ENCODE measurements at regions of chr16 and their contacts with region 1.

Region 1: DNA sequence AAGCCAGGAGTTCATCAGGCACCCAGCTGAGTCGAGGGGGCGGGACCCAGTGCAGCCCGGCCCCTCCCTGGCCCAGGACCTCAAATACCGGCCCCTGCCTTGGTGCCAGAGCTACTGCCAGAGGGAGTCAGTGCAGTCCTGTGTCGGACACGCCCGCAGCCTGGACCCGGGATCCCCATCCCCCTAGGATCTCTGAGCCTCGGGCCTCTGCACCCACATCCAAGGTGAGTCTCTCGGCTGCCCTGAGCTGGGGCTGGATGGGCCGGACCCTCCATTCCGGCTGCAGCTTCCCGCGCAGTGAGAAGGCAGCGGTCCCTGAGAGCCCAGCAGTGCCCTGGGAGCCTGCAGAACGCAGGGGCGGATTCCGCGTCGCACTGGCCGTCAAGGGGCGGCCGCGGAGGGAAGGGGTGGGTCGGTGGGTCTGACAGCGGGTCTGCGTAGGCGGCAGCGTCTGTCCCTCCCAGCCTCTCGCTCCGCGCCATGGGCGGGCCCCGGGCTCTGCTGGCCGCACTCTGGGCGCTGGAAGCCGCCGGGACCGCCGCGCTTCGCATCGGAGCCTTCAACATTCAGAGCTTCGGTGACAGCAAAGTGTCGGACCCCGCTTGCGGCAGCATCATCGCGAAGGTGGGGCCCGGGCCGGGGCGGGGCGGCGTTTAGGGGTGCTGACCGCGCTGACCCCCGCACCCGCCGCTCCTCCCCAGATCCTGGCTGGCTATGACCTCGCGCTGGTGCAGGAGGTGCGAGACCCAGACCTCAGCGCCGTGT is at the start of gene DNASE1L2:
- H3K4me3 ChIP-seq: peak within 1 kb of the TSS; percentile 31
- H3K27ac ChIP-seq: peak within 1 kb of the TSS; percentile 48; the same call in 1 of the 2 replicates
- H3K4me1 ChIP-seq: peaks cover 4% of the 10 kb centered on the region; the same call in 1 of the 2 replicates
- CTCF ChIP-seq: no peak

Region 2: GRCh38 chr16:2095315-2095853 is 141.1 kb before region 1 on chr16:
- CTCF ChIA-PET with region 1: no interaction called
- POLR2A ChIA-PET with region 1: no interaction called
- H3K4me3 ChIP-seq: no peak overlapping the region
- H3K27ac ChIP-seq: no peak overlapping the region
- H3K4me1 ChIP-seq: no peaks in the 10 kb centered on the region
- CTCF ChIP-seq: no peak

Region 3: GRCh38 chr16:2213817-2214720 is 22.4 kb before region 1 on chr16:
- CTCF ChIA-PET with region 1: interaction called, 3 read pairs
- POLR2A ChIA-PET with region 1: interaction called, 14 read pairs
- H3K4me3 ChIP-seq: peak overlapping the region; percentile 78
- H3K27ac ChIP-seq: peak overlapping the region; percentile 94
- H3K4me1 ChIP-seq: 0 out of 2 replicates have a peak, but pooled peaks cover 2% of the 10 kb centered on the region
- CTCF ChIP-seq: peak; percentile 28; the same call in 1 of the 2 replicates

Region 4: DNA sequence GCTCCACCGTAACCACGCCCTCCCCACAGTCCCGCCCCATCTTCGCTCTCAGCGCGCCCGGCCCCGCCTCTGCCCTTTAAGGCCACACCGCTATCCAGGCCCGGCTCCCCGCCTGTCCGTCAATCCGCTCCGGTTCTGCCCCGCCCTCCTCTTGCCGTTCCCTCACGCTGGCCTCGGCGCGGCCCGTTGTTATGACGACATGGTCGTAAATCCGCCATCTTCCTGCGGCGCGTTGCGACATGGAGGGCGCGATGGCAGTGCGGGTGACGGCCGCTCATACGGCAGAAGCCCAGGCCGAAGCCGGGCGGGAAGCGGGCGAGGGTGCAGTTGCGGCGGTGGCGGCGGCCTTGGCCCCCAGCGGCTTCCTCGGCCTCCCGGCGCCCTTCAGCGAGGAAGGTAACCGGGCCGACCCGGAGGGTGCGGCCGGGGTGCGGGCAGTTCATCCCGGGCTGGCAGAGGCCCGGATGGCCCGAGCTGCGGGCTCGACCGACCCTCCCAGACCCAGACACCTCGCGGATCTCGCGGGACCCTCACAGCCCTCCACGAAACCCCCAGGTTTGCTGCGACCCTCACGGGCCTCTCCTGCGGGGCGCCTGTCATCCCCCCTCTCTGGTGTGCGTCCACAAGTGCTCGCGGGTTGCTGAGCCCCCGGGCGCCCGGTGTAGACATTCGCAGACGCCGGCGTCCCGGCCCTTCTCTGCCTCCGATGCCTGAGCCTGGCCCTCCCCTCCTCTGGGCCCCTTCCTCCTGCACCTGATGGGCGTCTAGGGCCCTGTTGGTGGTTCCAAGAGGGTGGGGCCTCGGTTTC is 12.9 kb before region 1 on chr16 and contains the start of gene E4F1:
- CTCF ChIA-PET with region 1: no interaction called
- POLR2A ChIA-PET with region 1: interaction called, 17 read pairs
- H3K4me3 ChIP-seq: peak within 1 kb of the TSS; percentile 96
- H3K27ac ChIP-seq: peak within 1 kb of the TSS; percentile 94
- H3K4me1 ChIP-seq: 0 out of 2 replicates have a peak, but pooled peaks cover 2% of the 10 kb centered on the region
- CTCF ChIP-seq: no peak; the same call in 1 of the 2 replicates

Region 5: GRCh38 chr16:2260250-2260649 is 23.7 kb after region 1 on chr16:
- CTCF ChIA-PET with region 1: no interaction called
- POLR2A ChIA-PET with region 1: no interaction called
- H3K4me3 ChIP-seq: no peak overlapping the region
- H3K27ac ChIP-seq: no peak overlapping the region
- H3K4me1 ChIP-seq: 0 out of 2 replicates have a peak, but pooled peaks cover 2% of the 10 kb centered on the region
- CTCF ChIP-seq: no peak

Measured in HEK293 (cell line).